ENCODE measurements at regions of chr5 and their contacts with region 1.

Region 1: DNA sequence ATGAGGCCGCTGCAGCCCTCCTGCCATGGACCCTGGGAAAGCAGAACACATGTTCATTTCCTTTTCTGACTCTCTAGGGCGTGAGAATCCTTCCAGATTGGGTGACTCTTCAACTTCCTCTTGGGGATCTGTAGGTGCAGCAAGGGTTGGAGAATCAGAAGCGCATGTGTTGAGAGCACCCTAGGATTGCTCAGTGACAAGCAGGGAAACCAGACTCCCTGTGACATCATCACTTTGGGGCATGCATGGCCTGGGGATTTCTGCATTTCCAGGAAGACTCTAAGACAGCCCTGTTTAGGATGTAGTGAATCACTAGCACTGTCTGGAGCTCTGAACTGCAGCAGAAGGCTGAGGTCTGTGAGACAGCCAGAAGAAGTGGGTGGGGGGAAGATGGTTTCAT is 15.1 kb upstream of the LCP2 start:
- DNase-seq: peak; percentile 84
- ATAC-seq: peak; percentile 91
- H3K4me3 Mint-ChIP-seq: peak overlapping the region; percentile 80
- H3K27ac Mint-ChIP-seq: peak overlapping the region; percentile 98
- H3K4me1 Mint-ChIP-seq: peaks cover 67% of the 10 kb centered on the region
- H3K27me3 Mint-ChIP-seq: no peaks in the 10 kb centered on the region

Region 2: GRCh38 chr5:168822745-168823281 is 1489.9 kb before region 1 on chr5:
- CTCF ChIA-PET with region 1: no interaction called
- POLR2A ChIA-PET with region 1: no interaction called
- intact Hi-C with region 1: loop called in 1 of 2 experiments (anchors 2 kb)
- DNase-seq: peak; percentile 71
- ATAC-seq: peak; percentile 88
- H3K4me3 Mint-ChIP-seq: peak overlapping the region; percentile 58
- H3K27ac Mint-ChIP-seq: peak overlapping the region; percentile 94
- H3K4me1 Mint-ChIP-seq: peaks cover 36% of the 10 kb centered on the region
- H3K27me3 Mint-ChIP-seq: peaks cover 6% of the 10 kb centered on the region

Region 3: DNA sequence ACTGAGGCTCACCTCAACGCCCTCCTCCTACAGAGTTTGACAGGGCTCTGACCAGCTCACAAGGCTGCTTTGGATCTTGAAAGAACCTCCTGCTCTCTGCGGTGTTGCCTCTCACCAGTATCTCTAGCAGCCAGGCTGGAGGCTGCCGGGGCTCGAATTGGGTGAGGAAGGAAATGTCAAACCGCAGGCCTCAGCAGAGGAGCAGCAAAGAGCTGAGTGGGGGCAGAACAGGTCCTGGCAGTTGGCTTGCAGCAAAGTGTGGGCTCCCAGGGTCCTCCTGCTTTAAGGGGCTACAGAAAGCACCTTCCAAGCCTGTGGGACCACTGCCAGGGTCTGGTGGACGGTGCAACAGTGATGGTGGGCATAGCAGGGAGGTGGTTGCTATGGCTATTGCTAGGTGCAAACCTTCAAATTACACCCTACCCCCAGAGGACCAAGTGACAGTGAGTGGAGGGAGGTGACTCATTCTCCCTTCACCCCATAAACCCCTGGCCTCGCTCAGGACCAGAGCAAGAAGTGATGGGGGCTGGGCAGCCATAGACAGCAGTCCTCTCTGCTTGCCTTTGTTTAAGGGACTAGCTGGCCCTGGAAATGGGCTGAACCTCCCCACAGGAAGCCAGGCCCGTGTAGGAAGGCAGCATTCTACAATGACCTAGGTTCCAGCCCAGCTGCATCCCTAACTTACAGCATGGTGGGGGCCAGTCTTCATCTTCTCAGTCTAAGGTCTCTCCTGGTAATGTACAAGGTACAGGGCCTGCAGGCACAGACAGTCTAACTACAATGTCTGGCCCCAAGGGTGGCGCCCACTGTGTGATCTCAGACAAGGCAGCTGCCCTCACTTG is 33.8 kb before region 1 on chr5:
- CTCF ChIA-PET with region 1: interaction called, 10 read pairs
- POLR2A ChIA-PET with region 1: interaction called, 9 read pairs
- intact Hi-C with region 1: loop called (anchors 1 kb)
- DNase-seq: peak; percentile 93
- ATAC-seq: peak; percentile 73
- H3K4me3 Mint-ChIP-seq: peak overlapping the region; percentile 48
- H3K27ac Mint-ChIP-seq: peak overlapping the region; percentile 90
- H3K4me1 Mint-ChIP-seq: peaks cover 97% of the 10 kb centered on the region
- H3K27me3 Mint-ChIP-seq: no peaks in the 10 kb centered on the region

Region 4: GRCh38 chr5:170293273-170293672 is 19.4 kb before region 1 on chr5:
- CTCF ChIA-PET with region 1: interaction called, 6 read pairs
- POLR2A ChIA-PET with region 1: interaction called, 15 read pairs
- intact Hi-C with region 1: loop called (anchors 1 kb)
- DNase-seq: peak; percentile 70
- ATAC-seq: peak; percentile 16
- H3K4me3 Mint-ChIP-seq: peak overlapping the region; percentile 88
- H3K27ac Mint-ChIP-seq: peak overlapping the region; percentile 97
- H3K4me1 Mint-ChIP-seq: peaks cover 72% of the 10 kb centered on the region
- H3K27me3 Mint-ChIP-seq: no peaks in the 10 kb centered on the region

Region 5: DNA sequence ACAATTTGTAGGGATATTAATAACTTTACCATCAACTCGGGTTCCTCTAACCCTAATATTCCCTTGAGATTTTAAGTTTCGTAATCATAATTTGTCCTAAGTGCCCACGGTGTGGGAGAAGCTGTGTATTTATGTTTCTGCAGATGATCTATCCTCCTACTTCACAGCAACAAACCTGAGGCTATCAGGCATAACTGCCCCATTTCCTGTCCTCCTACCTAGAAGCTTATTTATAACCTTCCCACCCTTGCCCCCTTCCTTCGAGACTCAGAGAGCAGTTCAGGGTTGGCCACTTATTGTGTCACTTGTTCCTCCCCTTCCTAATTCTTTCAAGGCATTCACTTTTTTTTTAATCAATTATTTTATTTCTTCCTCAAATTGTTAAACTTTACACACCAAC is 14.5 kb after region 1 on chr5:
- CTCF ChIA-PET with region 1: interaction called, 39 read pairs
- POLR2A ChIA-PET with region 1: interaction called, 52 read pairs
- intact Hi-C with region 1: loop called (anchors 1 kb)
- DNase-seq: no peak
- ATAC-seq: no peak
- H3K4me3 Mint-ChIP-seq: no peak overlapping the region
- H3K27ac Mint-ChIP-seq: no peak overlapping the region
- H3K4me1 Mint-ChIP-seq: peaks cover 29% of the 10 kb centered on the region
- H3K27me3 Mint-ChIP-seq: no peaks in the 10 kb centered on the region

Region 6: GRCh38 chr5:170597109-170597751 is 284.6 kb after region 1 on chr5:
- CTCF ChIA-PET with region 1: no interaction called
- POLR2A ChIA-PET with region 1: no interaction called
- intact Hi-C with region 1: loop called in 1 of 2 experiments (anchors 1 kb)
- DNase-seq: peak; percentile 69
- ATAC-seq: peak; percentile 94
- H3K4me3 Mint-ChIP-seq: no peak overlapping the region
- H3K27ac Mint-ChIP-seq: no peak overlapping the region
- H3K4me1 Mint-ChIP-seq: peaks cover 20% of the 10 kb centered on the region
- H3K27me3 Mint-ChIP-seq: peaks cover 41% of the 10 kb centered on the region